WTC11 (cell line): ENCODE measurements at regions of chr15 and their contacts with region 1.

Region 1: DNA sequence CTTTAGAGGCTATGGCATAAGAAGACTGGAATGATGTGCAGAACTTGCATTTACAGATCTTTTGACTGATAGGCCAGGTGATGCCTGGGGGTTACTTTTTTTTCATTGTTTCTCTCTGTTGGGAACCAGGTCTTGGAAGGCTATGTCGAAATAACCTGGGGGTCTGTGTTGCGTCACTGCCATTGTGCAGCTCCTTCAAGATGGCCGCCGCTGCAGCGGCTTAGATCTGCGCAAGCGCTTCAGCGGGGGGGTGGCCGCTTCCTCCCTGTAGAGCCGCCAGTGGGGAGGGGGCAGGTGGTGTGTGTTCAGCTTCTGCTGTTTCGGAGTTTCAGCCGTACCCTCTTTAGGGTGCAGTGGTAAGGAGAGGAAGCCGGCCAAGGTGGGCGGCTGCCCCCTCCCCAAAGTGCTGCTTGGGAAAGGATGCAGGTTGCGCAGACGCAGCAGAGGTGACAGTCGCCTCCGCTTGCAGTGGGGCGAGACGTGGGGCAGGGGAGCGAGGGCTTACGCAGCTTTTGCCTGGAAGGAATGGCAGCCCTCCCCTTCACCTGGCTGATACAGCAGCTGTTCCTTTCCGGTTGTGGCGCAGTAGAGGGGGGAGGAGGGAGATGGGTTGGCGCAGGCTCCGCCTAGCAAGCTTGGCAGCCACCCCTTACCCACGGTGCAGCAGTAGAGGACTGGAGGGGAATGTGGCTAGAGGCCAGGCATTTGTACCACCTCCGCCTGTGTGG is 1.5 kb downstream of the SNRPN start:
- DNase-seq: peak; percentile 67
- ATAC-seq: peak; percentile 74
- H3K4me3 Mint-ChIP-seq: peak overlapping the region; percentile 89
- H3K27ac Mint-ChIP-seq: peak overlapping the region; percentile 97
- H3K4me1 Mint-ChIP-seq: peaks cover 48% of the 10 kb centered on the region
- H3K27me3 Mint-ChIP-seq: peaks cover 2% of the 10 kb centered on the region
- CTCF ChIP-seq: no peak

Region 2: DNA sequence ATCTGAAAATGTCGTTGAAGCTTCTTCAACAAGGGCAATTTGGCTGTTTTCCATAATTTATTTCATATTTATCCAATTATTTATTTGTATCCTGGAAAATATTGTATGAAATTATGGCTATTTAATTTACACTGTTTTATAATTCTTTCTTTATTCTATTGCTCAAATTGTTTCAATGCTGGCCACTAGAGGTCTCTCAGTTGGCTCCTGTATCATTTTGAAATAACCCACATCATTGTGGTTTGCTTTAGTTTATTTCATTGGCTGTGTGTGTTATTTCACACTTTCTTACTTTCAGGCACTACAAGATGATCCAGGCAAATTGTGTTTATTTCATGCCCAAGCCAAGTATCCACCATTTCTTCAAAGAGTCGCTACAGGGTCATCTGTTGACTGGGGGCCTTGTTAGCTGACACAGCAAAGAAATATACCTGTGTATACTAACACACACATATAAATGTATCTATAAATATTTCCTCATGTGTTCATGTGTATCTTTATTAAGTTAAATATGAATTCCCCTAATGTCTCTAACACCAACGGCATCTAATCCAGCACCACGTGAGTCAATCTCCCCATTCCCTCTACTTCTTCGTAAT is 194.5 kb before region 1 on chr15:
- CTCF ChIA-PET with region 1: no interaction called
- POLR2A ChIA-PET with region 1: no interaction called
- DNase-seq: no peak
- ATAC-seq: no peak
- H3K4me3 Mint-ChIP-seq: no peak overlapping the region
- H3K27ac Mint-ChIP-seq: no peak overlapping the region
- H3K4me1 Mint-ChIP-seq: peaks cover 44% of the 10 kb centered on the region
- H3K27me3 Mint-ChIP-seq: no peaks in the 10 kb centered on the region
- CTCF ChIP-seq: no peak

Region 3: DNA sequence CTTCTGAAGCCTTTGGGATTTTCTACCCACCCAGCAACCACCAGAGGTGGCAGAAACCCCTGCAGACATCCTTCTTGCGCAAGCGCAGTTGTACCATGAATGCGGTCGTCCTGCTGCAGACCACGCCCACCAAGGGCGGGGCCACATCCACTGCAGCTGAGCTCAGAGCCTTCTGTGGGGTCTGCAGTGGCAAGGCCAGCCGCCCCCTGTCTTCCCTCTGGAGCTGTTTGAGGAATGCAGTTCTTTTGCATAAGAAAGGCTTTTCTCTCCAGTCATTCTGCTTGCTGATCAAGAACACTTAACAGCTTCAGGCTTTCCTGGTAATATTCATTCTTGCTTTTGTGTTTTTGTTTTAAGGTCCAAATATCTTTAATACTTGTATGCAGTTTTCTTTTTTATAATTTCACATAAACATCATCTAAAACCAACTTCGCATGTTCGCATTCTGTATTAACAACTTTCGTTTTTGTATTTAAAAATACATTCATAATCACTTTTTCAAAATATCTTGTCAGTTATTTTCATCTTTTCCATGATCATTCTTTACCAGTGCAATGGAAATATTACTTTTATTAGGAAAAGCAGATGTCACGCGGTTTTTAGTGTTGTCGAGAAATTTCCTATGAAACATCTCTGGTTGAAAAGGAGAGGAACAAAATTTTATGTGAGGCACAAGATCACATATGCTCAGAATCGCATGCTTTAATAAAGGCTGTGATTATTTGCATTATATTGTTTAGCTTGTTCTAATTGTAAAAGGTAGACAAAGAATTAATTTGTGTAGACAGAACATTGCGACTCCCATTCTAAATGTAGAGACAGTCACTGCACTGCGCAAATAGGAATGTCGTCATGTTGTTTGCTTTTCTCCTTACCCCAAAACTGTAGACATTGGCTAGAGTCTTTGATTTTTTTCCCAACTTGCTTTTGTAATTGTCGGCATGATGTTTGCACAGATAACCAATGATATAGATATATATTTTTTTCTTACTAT is 99.6 kb before region 1 on chr15:
- CTCF ChIA-PET with region 1: interaction called, 4 read pairs
- POLR2A ChIA-PET with region 1: interaction called, 13 read pairs
- DNase-seq: peak; percentile 94
- ATAC-seq: peak; percentile 86
- H3K4me3 Mint-ChIP-seq: peak overlapping the region; percentile 61
- H3K27ac Mint-ChIP-seq: peak overlapping the region; percentile 99
- H3K4me1 Mint-ChIP-seq: peaks cover 39% of the 10 kb centered on the region
- H3K27me3 Mint-ChIP-seq: peaks cover 3% of the 10 kb centered on the region; the same call in 1 of the 2 replicates
- CTCF ChIP-seq: no peak

Region 4: DNA sequence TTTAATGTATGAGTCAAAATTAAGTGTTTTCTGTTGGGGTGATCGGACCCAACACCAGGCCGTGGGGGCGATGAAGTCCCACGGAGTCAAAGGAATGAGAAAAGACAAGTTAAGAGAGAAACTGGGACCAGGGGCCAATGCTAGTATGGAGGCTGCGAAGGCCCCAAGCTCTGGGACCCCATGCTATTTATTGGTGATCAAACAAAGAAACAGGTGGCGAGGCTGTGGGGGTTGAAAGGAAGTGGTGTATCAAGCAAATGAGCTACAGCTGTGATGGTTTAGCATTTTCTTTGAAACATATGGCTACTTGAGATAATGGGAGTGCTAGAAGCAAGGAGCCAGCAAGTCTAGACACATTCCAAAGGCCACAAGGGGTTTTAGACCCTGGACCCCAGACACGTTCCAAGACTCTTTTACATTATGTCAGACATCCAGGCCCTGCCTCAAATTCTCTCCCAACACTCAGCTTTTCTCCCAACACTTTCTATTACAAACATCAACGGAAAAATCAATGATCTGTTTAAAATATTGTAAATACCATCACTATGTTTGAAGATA is 57.5 kb before region 1 on chr15:
- CTCF ChIA-PET with region 1: no interaction called
- POLR2A ChIA-PET with region 1: interaction called, 10 read pairs
- DNase-seq: peak; percentile 63
- ATAC-seq: peak; percentile 56
- H3K4me3 Mint-ChIP-seq: no peak overlapping the region
- H3K27ac Mint-ChIP-seq: peak overlapping the region; percentile 99
- H3K4me1 Mint-ChIP-seq: peaks cover 59% of the 10 kb centered on the region
- H3K27me3 Mint-ChIP-seq: no peaks in the 10 kb centered on the region; the same call in 1 of the 2 replicates
- CTCF ChIP-seq: no peak

Region 5: GRCh38 chr15:24944954-24945353 is 11.3 kb before region 1 on chr15:
- CTCF ChIA-PET with region 1: no interaction called
- POLR2A ChIA-PET with region 1: no interaction called
- DNase-seq: no peak
- ATAC-seq: no peak
- H3K4me3 Mint-ChIP-seq: no peak overlapping the region
- H3K27ac Mint-ChIP-seq: no peak overlapping the region
- H3K4me1 Mint-ChIP-seq: peaks cover 10% of the 10 kb centered on the region
- H3K27me3 Mint-ChIP-seq: no peaks in the 10 kb centered on the region
- CTCF ChIP-seq: no peak